ENCODE measurements at regions of chr6 and their contacts with region 1.

Region 1: DNA sequence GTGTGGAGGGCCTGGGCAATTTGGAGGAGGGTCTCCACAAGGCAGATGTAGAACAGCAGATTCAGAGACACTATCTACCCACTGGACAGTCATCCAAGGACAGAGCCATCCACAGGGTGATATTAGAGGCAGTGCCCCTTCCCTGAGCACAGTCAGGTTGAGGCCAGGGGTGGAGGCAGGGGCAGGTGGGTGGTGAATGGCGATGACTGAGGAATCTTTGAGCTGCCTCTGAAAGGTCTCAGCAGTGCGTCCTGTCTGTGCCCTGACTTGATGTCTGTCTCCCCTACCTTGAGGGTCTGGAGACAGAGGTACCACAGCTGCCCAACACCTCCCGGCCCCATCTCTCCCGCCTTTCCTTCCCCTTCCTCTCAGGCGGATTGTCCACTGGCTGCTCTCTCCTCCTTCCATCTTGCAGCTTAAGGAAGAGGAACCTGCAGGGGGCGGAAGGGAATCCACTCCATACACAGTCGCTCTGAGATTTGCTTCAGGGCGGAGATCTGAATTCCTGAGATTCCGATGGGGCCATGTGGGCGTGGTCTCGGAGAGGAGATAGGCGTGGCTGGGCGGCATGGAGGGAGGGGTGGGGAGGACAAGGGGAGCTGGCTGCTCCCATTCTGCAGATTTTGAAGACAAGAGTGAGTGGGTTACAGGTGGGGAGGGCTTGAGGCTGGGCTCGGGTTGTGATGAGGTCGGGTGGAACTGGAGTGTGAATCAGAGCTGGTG is 1.7 kb downstream of the MUCL3 start:
- DNase-seq: peak; percentile 83
- ATAC-seq: peak; percentile 95
- H3K4me3 ChIP-seq: peak overlapping the region; percentile 22 to 47
- H3K27ac ChIP-seq: peak overlapping the region; percentile 41
- H3K4me1 ChIP-seq: peaks cover 14 to 19% of the 10 kb centered on the region in 2 experiments
- H3K27me3 ChIP-seq: no peaks in the 10 kb centered on the region
- CTCF ChIP-seq: peak; percentile 64 to 83 (median 64); a peak in 5 of 6 replicates
- POLR2A ChIP-seq: no peak
- RAD21 ChIP-seq: peak; percentile 67

Region 2: GRCh38 chr6:31068669-31069340 is 126.3 kb after region 1 on chr6:
- CTCF ChIA-PET with region 1: interaction called, 20 read pairs
- POLR2A ChIA-PET with region 1: interaction called, 4 read pairs
- RAD21 ChIA-PET with region 1: interaction called, 3 to 4 read pairs
- intact Hi-C with region 1: no loop called
- DNase-seq: peak; percentile 81
- ATAC-seq: peak; percentile 94
- H3K4me3 ChIP-seq: no peak overlapping the region
- H3K27ac ChIP-seq: no peak overlapping the region
- H3K4me1 ChIP-seq: peaks cover 4 to 14% of the 10 kb centered on the region in 2 experiments; a peak in 3 of 4 replicates
- H3K27me3 ChIP-seq: no peaks in the 10 kb centered on the region
- CTCF ChIP-seq: peak; percentile 88 to 92 (median 91)
- POLR2A ChIP-seq: no peak
- RAD21 ChIP-seq: peak; percentile 82

Region 3: GRCh38 chr6:31197559-31198305 is 255.2 kb after region 1 on chr6:
- CTCF ChIA-PET with region 1: no interaction called
- POLR2A ChIA-PET with region 1: no interaction called
- RAD21 ChIA-PET with region 1: no interaction called
- intact Hi-C with region 1: loop called (anchors 1 kb)
- DNase-seq: peak; percentile 66
- ATAC-seq: peak; percentile 81
- H3K4me3 ChIP-seq: peak overlapping the region; percentile 79 to 88
- H3K27ac ChIP-seq: peak overlapping the region; percentile 95
- H3K4me1 ChIP-seq: peaks cover 12 to 30% of the 10 kb centered on the region in 2 experiments
- H3K27me3 ChIP-seq: no peaks in the 10 kb centered on the region
- CTCF ChIP-seq: no peak
- POLR2A ChIP-seq: peak; percentile 38
- RAD21 ChIP-seq: 0 out of 2 replicates have a peak, but pooled peaks have one; percentile 5

Measured in HCT116 (cell line).